Posterior cingulate gyrus (tissue), 11 donors: ENCODE measurements at regions of chr6 and their contacts with region 1.

Region 1: DNA sequence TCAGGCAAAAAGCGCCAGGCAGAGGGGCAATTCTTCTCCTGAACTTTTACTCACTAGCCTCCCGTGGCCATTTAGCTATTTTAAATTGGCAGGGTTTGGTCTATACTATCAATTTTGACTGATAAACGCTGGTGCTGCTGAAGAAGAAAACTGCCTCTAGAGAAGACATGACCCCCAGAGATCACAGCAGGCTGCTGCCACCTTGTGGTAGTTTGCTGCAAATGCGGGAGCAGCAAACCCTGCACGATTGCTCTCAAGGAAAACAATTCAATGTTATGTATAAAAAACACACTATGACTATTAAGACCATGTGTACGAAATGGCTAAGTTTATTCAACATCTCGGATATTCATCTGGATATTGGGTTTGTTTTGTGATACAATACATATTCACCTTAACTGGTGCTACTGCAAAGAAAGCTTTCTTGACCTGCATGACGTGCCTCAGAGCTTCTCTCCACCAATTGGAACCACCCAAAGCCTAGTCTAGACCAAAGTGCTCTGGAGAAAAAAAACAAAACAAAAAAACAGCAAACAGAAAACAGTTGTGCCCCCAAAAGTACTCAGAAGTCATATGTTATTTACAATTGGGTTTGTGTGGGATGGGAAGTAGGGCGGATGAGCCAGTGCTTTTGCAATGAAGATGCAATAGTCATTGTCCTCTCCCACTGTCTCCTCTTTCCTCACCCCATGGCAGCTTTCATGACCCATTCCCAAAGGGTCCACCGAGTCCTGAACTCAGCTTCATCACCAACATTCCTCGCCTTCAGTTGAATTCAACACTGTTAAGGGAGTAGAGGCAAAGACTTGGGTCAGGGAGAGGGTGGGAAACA is 19.6 kb upstream of the IL17F start:
- DNase-seq: peak; percentile 57 to 96 (median 69)

Region 2: GRCh38 chr6:52027699-52028098 is 236.2 kb before region 1 on chr6:
- intact Hi-C with region 1: no loop called
- DNase-seq: no peak

Region 3: GRCh38 chr6:52164319-52165094 is 99.4 kb before region 1 on chr6:
- intact Hi-C with region 1: loop called (anchors 2 kb)
- DNase-seq: no peak